SK-N-SH (cell line): ENCODE measurements at regions of chr1 and their contacts with region 1.

Region 1: DNA sequence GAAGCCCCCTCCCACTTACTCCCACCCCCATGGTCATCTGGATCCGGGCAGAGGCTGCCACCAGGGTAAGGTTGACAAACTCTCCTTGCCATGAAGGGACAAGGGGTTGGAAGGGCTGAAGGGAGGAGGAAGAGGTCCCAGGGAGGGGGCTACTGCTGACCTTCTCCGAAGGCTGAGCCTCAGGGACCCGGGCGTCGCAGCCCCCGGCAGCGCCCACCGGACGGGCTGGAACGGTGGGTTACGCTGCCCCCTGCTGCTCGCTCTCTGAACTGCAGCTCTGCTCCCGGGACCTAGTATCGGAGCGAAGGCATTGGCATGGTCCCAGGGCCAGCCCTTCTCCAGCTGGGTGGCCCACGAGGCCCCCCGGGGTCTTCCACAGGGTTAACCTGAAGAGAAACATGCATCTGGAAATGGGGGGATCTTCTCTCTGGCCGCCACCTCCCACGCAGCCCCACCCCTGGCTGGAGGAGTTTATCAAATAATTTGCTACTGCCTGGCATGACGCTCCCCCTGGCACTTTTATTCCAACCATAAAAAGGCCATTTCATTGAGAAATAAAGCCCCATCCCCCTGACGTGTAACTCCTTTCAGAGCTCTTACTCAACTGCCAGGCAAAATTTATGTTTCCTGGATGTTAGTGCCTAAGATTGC is 70.4 kb upstream of the TARDBP start:
- DNase-seq: peak; percentile 92
- H3K4me3 ChIP-seq: peak overlapping the region in 1 of 2 experiments; percentile 51; a peak in 2 of 4 replicates
- H3K27ac ChIP-seq: no peak overlapping the region
- H3K4me1 ChIP-seq: peaks cover 0 to 55% of the 10 kb centered on the region in 2 experiments; a peak in 3 of 4 replicates
- H3K27me3 ChIP-seq: no peaks in the 10 kb centered on the region
- CTCF ChIP-seq: peak; percentile 88
- EP300 ChIP-seq: no peak
- RAD21 ChIP-seq: peak; percentile 80

Region 2: GRCh38 chr1:10928654-10929053 is 13.4 kb before region 1 on chr1:
- CTCF ChIA-PET with region 1: interaction called, 17 read pairs
- POLR2A ChIA-PET with region 1: interaction called, 6 read pairs
- DNase-seq: no peak
- H3K4me3 ChIP-seq: no peak overlapping the region
- H3K27ac ChIP-seq: no peak overlapping the region
- H3K4me1 ChIP-seq: no peaks in the 10 kb centered on the region
- H3K27me3 ChIP-seq: no peaks in the 10 kb centered on the region
- CTCF ChIP-seq: no peak
- EP300 ChIP-seq: no peak
- RAD21 ChIP-seq: no peak

Region 3: DNA sequence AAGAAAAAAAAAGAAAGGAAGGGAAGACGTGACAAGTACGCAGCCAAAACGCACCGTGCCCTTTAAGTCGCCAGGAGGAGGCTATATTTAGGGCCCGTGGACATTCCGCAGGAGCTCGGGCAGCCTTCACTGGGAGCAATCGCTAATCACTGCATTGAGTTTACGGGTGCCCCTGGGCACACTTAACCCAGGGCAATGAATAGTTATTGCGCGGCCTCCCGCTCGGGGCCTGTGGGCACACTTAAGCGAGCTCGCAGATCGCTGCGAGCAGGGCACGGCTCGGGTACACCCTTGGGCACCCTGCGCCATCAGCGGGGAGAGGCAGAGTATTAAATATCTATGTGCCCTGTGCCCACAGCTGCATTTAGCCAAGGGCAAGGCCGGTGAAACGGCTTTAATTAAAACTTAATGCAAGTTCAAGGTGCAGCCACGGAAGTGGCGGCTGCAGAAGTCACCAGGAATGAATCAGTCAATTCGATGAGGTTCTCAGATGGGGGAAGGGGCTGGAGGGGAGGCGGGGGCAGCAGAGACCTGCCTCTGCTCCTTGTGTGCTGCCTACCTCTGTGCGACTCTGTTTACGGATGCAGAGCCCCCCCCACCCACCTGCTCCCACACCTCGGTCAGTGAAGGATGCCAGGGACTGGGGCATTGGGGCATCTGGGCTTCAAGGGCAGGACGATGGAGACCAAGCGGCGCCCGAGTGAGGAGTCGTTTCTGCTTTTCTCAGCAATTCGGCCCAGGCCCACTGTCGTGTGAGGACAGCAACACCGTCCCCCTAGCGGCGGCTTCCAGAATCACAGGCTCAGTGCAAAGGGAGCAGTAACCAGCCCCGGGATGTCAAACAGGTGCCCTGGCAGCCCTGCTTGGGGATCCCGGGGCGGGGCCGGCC is 18.6 kb after region 1 on chr1:
- CTCF ChIA-PET with region 1: interaction called, 30 read pairs
- POLR2A ChIA-PET with region 1: interaction called, 3 read pairs
- DNase-seq: peak; percentile 90
- H3K4me3 ChIP-seq: peak overlapping the region in 1 of 2 experiments; percentile 26; a peak in 1 of 4 replicates
- H3K27ac ChIP-seq: peak overlapping the region in 1 of 2 experiments; percentile 31; a peak in 1 of 4 replicates
- H3K4me1 ChIP-seq: peaks cover 0 to 14% of the 10 kb centered on the region in 2 experiments; a peak in 1 of 4 replicates
- H3K27me3 ChIP-seq: 0 out of 2 replicates have a peak, but pooled peaks cover 8% of the 10 kb centered on the region
- CTCF ChIP-seq: peak; percentile 77
- EP300 ChIP-seq: no peak
- RAD21 ChIP-seq: peak; percentile 74